Right ventricle myocardium inferior (tissue), 1 donor: ENCODE measurements at regions of chr6 and their contacts with region 1.

Region 1: DNA sequence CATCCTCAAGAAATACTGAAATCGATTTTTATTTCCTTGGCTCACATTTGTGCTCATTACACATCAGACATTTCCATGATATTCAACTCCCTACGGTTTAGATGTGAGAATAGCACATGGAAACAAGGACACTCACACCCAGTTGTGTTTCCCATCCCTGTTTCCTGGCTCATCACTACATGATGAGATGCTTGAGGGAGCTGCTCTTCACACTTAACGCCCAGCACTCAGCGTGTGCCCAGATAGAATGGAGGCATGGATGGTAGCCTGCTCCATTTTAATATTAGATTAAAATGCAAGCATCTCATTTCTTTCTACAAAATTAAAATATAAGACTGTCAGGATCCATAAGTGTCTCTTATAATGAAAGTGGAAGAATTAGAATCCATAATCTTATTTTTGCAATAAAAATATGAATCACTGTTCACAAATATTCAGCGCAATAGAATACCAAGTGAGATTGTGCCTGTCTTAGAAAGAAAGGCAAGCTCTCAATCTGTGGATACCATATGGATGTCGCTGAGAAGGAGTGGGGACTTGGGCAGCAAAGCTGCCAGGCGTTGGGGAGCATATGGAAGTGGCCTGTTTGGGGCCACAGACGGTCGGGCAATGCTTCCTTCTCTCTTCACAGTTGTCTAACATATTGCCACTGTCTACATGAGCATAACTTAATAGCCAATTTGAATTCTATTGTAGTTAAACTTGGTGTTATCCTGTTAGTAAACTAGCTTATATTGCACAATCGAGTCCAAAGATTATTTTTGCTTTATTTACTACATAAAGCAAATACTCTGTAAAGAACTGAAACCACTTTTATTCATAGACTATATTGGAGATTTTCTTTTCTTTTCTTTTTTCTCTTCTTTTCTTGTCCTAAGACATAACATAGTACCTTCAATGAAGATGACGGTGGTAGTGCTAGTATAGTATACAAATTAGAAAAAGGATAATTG is 206.8 kb upstream of the QKI start:
- DNase-seq: no peak
- ATAC-seq: no peak

Region 2: DNA sequence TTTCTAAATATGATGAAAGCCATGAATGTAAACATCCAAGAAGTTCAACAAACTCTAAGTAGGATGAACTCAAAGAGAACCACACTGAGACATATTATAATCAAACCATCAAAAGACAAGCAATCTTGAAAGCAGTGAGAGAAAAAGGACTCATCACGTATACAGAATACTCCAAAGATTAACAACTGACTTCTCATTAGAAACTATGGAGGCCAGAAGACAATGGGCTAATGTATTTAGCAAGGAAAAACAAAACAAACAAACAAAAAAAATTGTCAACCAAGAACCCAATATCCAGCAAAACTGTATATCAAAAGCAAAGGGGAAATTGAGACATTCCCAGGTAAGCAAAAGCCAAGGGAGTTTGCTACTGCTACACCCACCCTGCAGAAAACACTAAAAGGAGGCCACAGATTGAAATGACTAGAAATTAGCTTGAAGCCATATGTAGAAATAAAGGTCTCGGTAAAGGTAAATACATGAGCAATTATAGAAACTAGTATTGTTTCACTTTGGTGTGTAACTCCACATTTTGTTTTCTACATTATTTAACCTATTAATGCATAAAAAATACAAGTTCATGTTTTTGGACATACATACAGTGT is 94.2 kb before region 1 on chr6:
- intact Hi-C with region 1: no loop called
- DNase-seq: no peak
- ATAC-seq: no peak

Region 3: DNA sequence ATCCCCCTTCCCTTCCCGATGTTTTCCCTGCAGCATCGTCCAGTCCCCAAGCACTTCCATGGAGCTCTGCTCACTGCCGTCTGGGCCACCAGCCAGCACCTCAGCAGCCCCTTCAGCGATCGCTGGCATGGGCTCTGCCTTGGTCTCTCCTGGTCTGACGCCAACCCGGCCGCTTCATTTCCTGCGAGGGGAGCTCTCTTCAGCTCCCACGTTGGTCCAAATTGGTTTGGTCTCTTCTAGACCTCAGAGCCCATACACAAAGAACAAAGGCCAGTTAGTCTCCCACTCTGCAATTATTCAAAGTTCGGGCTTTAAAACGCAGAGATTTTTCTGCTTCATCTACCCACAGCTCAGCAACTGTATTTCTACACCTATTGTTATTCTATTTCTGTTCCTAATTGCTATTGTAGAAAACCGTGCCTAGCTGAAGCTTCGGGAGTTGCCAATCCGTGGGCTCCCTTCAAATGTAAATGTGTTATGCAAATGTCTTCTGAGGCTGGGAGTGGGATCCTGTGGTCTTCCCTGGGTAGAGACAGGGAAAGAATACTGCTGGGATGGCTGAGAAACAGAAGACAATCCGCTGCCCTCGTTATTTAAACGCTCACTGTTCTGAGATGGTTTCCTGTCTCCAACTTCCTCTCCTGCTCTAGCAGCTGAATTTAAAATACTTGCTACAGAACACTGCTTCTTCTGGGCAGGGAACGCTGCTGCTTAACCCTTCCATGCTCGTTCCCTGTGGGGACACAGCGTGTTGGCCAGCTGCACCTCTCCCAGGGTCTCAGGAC is 52.6 kb after region 1 on chr6:
- intact Hi-C with region 1: loop called (anchors 5 kb)
- DNase-seq: no peak
- ATAC-seq: peak; percentile 14